Naive thymus-derived CD4-positive, alpha-beta T cell (primary cell): ENCODE measurements at regions of chr5 and their contacts with region 1.

Region 1: DNA sequence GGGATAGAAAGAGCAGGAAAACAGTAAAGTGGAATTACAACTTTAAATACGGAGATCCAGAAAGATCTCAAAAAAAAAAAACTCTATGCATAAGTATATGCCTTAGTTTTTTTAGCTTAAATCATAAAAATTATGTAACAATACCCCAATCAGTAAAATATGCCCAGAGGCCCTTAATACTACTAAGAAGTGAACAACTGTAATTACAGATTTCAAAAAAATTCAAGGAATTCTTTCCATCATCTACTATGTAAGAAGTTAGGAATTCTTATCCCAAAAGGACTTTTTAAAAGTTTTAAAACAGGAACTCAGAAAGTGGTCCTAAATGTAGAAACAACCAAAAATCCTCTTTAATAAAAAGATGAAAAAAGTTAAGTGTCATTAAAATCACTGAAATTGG is 111.3 kb downstream of the SSBP2 start:
- DNase-seq: no peak
- ATAC-seq: no peak
- H3K4me3 ChIP-seq: no peak overlapping the region
- H3K4me3 Mint-ChIP-seq: no peak overlapping the region
- H3K27ac ChIP-seq: no peak overlapping the region
- H3K27ac Mint-ChIP-seq: no peak overlapping the region
- H3K4me1 ChIP-seq: no peaks in the 10 kb centered on the region
- H3K4me1 Mint-ChIP-seq: peaks cover 0 to 54% (median 28%) of the 10 kb centered on the region in 7 donors
- H3K27me3 ChIP-seq: no peaks in the 10 kb centered on the region
- H3K27me3 Mint-ChIP-seq: no peaks in the 10 kb centered on the region

Region 2: GRCh38 chr5:81606150-81606549 is 33.4 kb before region 1 on chr5:
- CTCF ChIA-PET with region 1: no interaction called
- POLR2A ChIA-PET with region 1: no interaction called
- intact Hi-C with region 1: no loop called
- DNase-seq: no peak
- ATAC-seq: no peak
- H3K4me3 ChIP-seq: no peak overlapping the region
- H3K4me3 Mint-ChIP-seq: no peak overlapping the region
- H3K27ac ChIP-seq: no peak overlapping the region
- H3K27ac Mint-ChIP-seq: no peak overlapping the region
- H3K4me1 ChIP-seq: no peaks in the 10 kb centered on the region
- H3K4me1 Mint-ChIP-seq: peaks cover 6 to 64% (median 39%) of the 10 kb centered on the region in 7 donors
- H3K27me3 ChIP-seq: no peaks in the 10 kb centered on the region
- H3K27me3 Mint-ChIP-seq: no peaks in the 10 kb centered on the region

Region 3: DNA sequence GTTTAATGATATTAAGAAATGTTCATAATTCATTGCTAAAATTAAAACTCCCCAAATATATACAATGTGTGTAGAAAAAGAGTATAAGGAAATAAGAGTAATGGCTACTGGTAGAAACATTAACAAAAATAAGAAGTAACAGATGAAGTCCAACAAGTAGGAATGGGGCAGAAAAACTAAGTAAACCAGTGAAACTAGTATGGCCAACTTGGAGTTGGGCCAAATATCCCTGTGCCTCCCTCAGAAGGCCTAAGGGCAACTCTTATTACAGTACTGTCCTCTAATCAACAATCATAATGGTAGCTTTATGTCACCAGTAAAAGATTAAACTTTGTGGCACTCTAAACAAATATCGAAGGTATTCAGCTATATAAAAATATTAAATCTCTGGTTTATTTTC is 17.8 kb after region 1 on chr5:
- CTCF ChIA-PET with region 1: no interaction called
- POLR2A ChIA-PET with region 1: no interaction called
- intact Hi-C with region 1: loop called in 1 of 2 experiments (anchors 2 kb)
- DNase-seq: no peak
- ATAC-seq: no peak
- H3K4me3 ChIP-seq: no peak overlapping the region
- H3K4me3 Mint-ChIP-seq: no peak overlapping the region
- H3K27ac ChIP-seq: no peak overlapping the region
- H3K27ac Mint-ChIP-seq: peak overlapping the region in 1 of 9 donors; percentile 50
- H3K4me1 ChIP-seq: no peaks in the 10 kb centered on the region
- H3K4me1 Mint-ChIP-seq: peaks cover 0 to 69% (median 45%) of the 10 kb centered on the region in 7 donors
- H3K27me3 ChIP-seq: no peaks in the 10 kb centered on the region
- H3K27me3 Mint-ChIP-seq: no peaks in the 10 kb centered on the region